ENCODE measurements at regions of chrX and their contacts with region 1.

Region 1: DNA sequence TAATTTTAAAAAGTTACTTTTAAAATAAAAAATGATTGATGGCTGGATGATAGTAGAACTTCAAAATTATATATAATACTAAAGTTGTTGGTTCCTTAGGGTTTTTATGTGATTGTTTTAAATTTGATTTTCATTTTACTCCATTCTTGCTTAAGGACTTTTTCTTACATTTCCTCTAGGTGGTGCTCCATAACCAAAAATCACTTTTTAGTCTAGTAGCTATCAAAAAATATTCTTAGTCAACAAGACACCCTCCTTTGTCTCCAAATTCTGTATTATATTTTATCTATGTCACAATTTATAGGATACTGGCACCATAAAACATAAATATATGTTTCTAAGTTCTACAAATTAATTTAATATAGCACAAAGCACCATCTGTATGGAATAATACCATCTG is 67.2 kb upstream of the BRWD3 start:
- DNase-seq: peak; percentile 55
- H3K4me3 ChIP-seq: no peak overlapping the region
- H3K27ac ChIP-seq: no peak overlapping the region
- H3K4me1 ChIP-seq: no peaks in the 10 kb centered on the region
- CTCF ChIP-seq: peak; percentile 77

Region 2: GRCh38 chrX:81195712-81196111 is 318.8 kb after region 1 on chrX:
- CTCF ChIA-PET with region 1: no interaction called
- POLR2A ChIA-PET with region 1: interaction called, 3 read pairs
- intact Hi-C with region 1: loop called (anchors 2 kb)
- DNase-seq: peak; percentile 70
- H3K4me3 ChIP-seq: no peak overlapping the region
- H3K27ac ChIP-seq: no peak overlapping the region
- H3K4me1 ChIP-seq: peaks cover under 1% of the 10 kb centered on the region
- CTCF ChIP-seq: peak; percentile 80

Region 3: DNA sequence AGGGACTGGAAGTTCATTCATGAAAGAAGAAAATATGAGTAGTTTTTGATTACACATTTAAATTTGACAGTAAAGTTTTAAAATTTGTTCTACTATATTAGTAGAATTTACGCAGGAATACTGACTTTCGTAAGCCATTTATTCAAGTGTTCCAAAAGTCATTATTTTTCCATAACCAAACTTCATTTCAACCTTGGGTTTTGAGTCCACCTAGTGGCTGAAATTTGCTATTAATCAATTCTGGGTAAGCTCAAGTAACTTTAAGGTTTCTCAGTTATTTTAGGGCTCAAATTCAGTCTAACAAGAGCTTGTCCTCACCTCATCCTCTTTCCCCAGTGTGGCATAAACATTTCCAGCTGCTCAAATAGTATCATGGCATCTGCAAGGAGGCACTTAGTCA is 500.5 kb after region 1 on chrX:
- CTCF ChIA-PET with region 1: no interaction called
- POLR2A ChIA-PET with region 1: no interaction called
- intact Hi-C with region 1: loop called (anchors 5 kb)
- DNase-seq: peak; percentile 23
- H3K4me3 ChIP-seq: no peak overlapping the region
- H3K27ac ChIP-seq: no peak overlapping the region
- H3K4me1 ChIP-seq: no peaks in the 10 kb centered on the region
- CTCF ChIP-seq: peak; percentile 72

Measured in OCI-LY7 (cell line).